ENCODE measurements at regions of chr13 and their contacts with region 1.

Region 1: DNA sequence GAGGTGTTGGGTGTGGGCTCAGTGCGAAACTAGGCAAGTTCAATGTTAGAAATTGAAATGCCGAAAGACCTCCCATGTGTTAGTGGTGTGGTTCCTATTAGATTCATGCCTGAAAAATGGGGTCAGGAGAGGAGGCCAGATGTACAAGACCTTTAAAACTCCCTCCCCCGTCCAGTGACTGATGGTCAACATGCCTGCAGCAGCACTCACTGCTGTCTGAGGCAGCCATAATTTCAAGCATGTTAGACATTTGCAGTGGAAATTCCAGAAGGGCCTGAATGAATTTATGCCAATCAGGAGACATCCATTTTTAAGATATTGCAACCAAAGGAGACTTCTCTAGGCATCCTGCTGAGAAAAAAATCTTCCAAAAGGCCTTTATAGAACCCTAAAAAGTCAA is 426.9 kb upstream of the NBEA start:
- DNase-seq: no peak
- ATAC-seq: no peak
- H3K4me3 ChIP-seq: no peak overlapping the region
- H3K4me3 Mint-ChIP-seq: no peak overlapping the region
- H3K27ac ChIP-seq: no peak overlapping the region
- H3K27ac Mint-ChIP-seq: no peak overlapping the region
- H3K4me1 ChIP-seq: no peaks in the 10 kb centered on the region
- H3K4me1 Mint-ChIP-seq: no peaks in the 10 kb centered on the region
- H3K27me3 ChIP-seq: no peaks in the 10 kb centered on the region
- H3K27me3 Mint-ChIP-seq: peaks cover 4% of the 10 kb centered on the region
- CTCF ChIP-seq: no peak

Region 2: GRCh38 chr13:34533941-34534340 is 18.7 kb after region 1 on chr13:
- CTCF ChIA-PET with region 1: no interaction called
- POLR2A ChIA-PET with region 1: no interaction called
- intact Hi-C with region 1: loop called in 1 of 2 experiments (anchors 1 kb)
- DNase-seq: no peak
- ATAC-seq: no peak
- H3K4me3 ChIP-seq: no peak overlapping the region
- H3K4me3 Mint-ChIP-seq: no peak overlapping the region
- H3K27ac ChIP-seq: no peak overlapping the region
- H3K27ac Mint-ChIP-seq: no peak overlapping the region
- H3K4me1 ChIP-seq: no peaks in the 10 kb centered on the region
- H3K4me1 Mint-ChIP-seq: no peaks in the 10 kb centered on the region
- H3K27me3 ChIP-seq: no peaks in the 10 kb centered on the region
- H3K27me3 Mint-ChIP-seq: no peaks in the 10 kb centered on the region
- CTCF ChIP-seq: no peak